ENCODE measurements at regions of chr1 and their contacts with region 1.

Region 1: GRCh38 chr1:30852026-30852425 is 56.5 kb downstream of the SDC3 start:
- DNase-seq: peak; percentile 75
- ATAC-seq: peak; percentile 66

Region 2: GRCh38 chr1:30801771-30802198 is 50.2 kb before region 1 on chr1:
- intact Hi-C with region 1: loop called (anchors 2 kb)
- DNase-seq: peak; percentile 91
- ATAC-seq: peak; percentile 60

Region 3: GRCh38 chr1:30888391-30888790 is 36.4 kb after region 1 on chr1:
- intact Hi-C with region 1: loop called (anchors 5 kb)
- DNase-seq: peak; percentile 79
- ATAC-seq: peak; percentile 92

Region 4: DNA sequence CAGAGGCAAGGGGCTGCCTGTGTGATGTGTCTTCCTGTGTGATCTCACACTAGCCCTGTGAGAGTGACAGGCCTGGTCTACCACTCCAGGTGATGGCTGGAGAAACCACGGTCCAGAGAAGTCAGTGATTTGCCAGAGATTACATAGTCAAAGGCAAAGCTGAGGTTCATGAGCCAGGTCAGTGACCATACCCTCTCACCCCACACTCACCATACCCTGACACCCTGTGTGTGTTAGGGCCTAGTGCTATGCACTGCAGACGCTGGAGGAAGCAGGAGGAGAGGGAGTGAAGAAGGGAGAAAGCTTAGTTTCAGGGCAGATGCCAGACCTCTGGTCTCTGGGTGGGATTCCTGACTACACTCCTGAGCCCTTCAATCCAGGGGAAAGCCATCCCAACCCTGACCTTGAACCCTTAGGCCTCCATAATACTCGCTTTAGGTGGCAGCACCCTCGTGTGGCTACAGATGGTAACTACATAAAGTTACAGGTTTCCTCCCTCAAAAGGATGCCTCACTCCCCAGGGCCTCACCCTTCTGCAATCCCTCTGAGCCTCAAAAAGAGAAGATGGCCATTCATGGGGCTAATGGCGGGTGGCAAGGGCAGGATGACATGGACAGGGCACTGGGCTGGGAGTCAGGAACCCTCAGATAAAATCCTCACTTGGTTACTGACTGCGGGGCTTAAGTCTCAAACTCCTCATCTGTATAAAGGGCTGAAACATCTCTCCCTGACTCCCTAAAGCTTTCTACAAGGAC is 77.3 kb after region 1 on chr1:
- intact Hi-C with region 1: no loop called
- DNase-seq: no peak
- ATAC-seq: peak; percentile 59